ENCODE measurements at regions of chr3 and their contacts with region 1.

Region 1: DNA sequence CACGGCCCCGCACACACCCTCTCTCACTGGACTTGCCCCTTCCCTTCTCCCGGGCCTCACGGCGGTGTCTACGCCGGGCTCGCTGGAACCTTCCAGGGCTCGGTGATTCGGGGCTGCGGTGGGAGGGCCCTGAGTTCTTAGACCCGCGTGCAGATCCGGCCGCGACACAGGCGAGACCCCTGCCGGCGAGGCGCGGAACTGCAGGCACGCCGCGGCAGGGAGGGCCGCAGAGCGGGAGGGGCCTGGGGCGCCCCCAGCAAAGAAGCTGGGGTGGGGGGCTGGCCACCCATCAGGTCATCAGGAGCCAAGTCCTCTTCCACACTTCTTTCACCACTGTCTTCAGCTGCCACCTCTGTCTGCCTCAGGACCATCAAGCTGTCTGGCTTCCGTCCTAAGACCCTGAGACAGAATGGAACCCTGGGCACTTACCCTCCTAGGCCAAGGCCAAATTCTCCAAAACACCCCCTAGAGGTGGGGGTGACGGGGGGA is 164.5 kb downstream of the XXYLT1 start:
- DNase-seq: no peak
- H3K4me3 ChIP-seq: peak overlapping the region; percentile 33
- CTCF ChIP-seq: peak; percentile 99

Region 2: GRCh38 chr3:194691481-194692283 is 414.8 kb before region 1 on chr3:
- CTCF ChIA-PET with region 1: interaction called, 171 read pairs
- POLR2A ChIA-PET with region 1: interaction called, 12 read pairs
- DNase-seq: no peak
- H3K4me3 ChIP-seq: no peak overlapping the region
- CTCF ChIP-seq: no peak

Region 3: GRCh38 chr3:194967151-194968117 is 139.0 kb before region 1 on chr3:
- CTCF ChIA-PET with region 1: no interaction called
- POLR2A ChIA-PET with region 1: no interaction called
- DNase-seq: no peak
- H3K4me3 ChIP-seq: no peak overlapping the region
- CTCF ChIP-seq: no peak

Region 4: DNA sequence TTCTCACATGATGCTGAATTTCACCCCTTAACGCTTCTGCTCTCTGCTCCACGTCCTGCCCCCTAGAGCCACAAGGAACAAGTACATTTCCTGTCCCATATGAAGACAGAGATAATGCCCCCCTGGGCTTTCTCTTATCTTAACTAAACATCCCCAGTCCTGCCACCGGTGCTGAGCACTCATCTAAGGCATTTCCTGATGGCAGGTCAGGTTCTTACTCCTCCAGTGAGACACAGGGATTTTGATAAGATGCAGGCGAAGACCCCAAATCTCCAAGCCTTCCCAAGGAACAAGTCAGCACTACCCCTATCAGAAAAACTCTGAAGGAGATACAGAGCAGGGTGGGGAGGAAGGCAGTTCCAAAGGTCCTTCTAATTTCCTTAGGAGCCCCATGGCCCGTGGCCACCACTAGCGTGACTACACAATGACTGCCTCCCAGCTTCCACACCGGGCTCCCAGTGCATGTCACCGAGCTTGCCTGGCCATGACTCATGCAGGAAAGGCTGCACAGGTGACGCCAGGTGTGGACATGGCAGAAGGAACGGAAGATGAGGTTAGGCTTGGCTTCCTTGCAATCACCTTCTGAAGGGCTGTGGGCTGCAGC is 11.6 kb after region 1 on chr3:
- CTCF ChIA-PET with region 1: interaction called, 107 read pairs
- POLR2A ChIA-PET with region 1: no interaction called
- DNase-seq: no peak
- H3K4me3 ChIP-seq: no peak overlapping the region
- CTCF ChIP-seq: no peak

Region 5: GRCh38 chr3:195123281-195123691 is 16.8 kb after region 1 on chr3:
- CTCF ChIA-PET with region 1: interaction called, 107 read pairs
- POLR2A ChIA-PET with region 1: no interaction called
- DNase-seq: no peak
- H3K4me3 ChIP-seq: no peak overlapping the region
- CTCF ChIP-seq: peak; percentile 62

Region 6: DNA sequence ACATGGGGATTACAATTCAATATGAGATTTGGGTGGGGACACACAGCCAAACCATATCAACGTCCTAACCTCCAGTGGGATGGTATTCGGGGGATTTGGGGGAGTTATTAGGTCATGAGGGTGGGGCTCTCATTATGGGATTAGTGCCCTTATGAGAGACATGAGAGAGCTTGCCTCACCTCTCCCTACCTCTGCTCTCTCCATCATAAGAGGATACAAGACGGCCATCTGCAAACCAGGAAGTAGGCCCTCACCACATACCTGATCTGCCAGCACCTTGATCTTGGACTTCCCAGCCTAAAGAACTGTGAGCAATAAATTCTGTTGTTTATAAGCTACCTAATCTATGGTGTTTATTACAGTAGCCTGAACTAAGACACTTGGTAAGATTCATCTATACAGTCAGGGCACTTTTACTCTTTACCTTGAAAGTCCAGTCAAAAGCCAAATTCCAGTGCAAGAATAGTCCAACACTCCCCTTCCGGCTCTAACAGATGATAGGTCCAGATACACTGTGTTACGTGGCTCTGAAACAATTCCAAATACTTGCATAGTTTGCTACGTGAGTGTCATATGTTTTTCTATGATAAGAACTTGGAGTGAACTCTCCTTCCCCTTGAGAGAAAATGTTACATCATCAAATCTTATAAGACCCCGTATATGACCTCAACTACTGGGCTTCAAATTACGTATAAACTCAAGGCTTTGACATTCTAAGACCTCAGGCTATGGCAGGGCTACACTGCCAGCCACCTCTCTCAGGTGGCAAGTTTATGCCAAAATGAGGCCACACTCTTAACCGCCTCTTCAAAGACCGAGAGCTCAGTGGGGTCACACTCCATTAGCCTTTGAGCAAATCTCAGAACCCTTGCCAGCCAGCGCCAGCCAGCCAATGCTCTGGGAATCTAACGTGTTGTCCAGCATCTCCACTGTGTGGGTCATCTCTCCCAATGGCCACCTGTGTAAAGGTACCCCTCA is 34.6 kb after region 1 on chr3:
- CTCF ChIA-PET with region 1: interaction called, 15 read pairs
- POLR2A ChIA-PET with region 1: no interaction called
- DNase-seq: no peak
- H3K4me3 ChIP-seq: no peak overlapping the region
- CTCF ChIP-seq: no peak

Region 7: DNA sequence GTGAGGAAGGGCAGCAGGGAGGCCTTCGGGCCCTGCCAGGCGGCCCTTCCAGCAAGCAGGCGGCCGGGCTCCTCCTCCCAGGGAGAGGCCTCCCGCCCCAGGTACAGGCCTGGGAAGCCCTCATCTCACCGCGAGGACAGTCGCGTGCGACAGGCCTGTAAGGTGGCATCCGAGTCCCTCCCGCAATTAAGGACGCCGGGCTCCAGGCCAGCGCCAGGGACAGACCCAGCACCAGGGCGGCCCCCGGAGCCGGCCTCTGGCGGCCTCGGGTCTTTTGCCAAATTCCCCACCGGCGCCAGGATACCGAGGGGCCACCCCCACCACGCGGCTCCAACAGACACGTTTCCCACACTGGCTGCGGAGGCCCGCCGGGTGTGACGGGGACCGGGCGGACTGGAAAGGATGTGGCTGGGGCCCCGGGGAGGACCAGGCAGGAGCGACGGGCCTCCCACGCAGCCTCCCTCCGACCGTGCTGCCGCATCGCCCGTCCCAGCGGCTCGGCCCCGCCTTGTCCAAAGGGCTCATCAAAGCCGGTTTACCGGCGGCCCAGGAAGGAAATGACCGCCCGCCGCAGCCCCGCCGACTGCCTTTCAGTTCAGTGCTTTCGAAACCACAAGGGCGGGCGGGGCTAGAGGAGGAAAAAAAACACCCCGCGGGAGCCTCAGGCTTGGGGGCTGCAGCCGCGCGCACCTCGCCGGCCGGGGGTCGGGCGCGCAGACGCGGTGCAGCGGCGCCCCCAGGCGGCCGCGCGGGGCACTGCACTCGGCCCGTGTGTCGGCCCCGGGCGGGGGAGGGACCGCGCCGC is 153.2 kb after region 1 on chr3:
- CTCF ChIA-PET with region 1: interaction called, 22 read pairs
- POLR2A ChIA-PET with region 1: no interaction called
- DNase-seq: no peak
- H3K4me3 ChIP-seq: peak overlapping the region; percentile 75
- CTCF ChIP-seq: peak; percentile 45

Region 8: GRCh38 chr3:195385526-195385925 is 279.1 kb after region 1 on chr3:
- CTCF ChIA-PET with region 1: no interaction called
- POLR2A ChIA-PET with region 1: no interaction called
- DNase-seq: no peak
- H3K4me3 ChIP-seq: no peak overlapping the region
- CTCF ChIP-seq: no peak